IMR-90 (cell line): ENCODE measurements at regions of chr22 and their contacts with region 1.

Region 1: GRCh38 chr22:30044369-30044768 is 35.9 kb upstream of the HORMAD2 start:
- DNase-seq: peak; percentile 93
- ATAC-seq: peak; percentile 73
- H3K4me3 ChIP-seq: no peak overlapping the region
- H3K27ac ChIP-seq: no peak overlapping the region
- H3K4me1 ChIP-seq: peaks cover 4% of the 10 kb centered on the region; the same call in 1 of the 2 replicates
- H3K27me3 ChIP-seq: no peaks in the 10 kb centered on the region
- CTCF ChIP-seq: no peak
- POLR2A ChIP-seq: no peak
- RAD21 ChIP-seq: no peak; the same call in 1 of the 2 replicates

Region 2: DNA sequence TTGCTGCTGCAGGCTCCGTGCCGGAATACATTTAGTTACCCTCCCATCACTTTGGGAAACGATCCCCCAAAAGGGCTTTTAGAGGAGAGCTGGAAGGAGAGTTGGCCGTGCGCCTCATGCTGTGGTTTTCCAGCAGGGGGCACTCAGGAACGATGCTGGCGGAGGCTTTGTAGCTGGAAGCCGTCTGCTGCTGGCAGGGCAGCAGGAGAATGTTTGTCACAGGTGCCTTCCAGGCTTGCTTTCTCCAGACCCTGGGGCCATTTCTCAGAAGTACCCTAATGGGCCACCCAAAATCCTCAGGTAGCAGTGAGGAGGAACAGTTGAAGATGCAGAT is 354.5 kb before region 1 on chr22:
- CTCF ChIA-PET with region 1: no interaction called
- POLR2A ChIA-PET with region 1: no interaction called
- dilution Hi-C with region 1: loop called (anchors 25 kb)
- in situ Hi-C with region 1: no loop called
- intact Hi-C with region 1: no loop called
- DNase-seq: peak; percentile 55
- ATAC-seq: peak; percentile 82
- H3K4me3 ChIP-seq: no peak overlapping the region
- H3K27ac ChIP-seq: no peak overlapping the region
- H3K4me1 ChIP-seq: 0 out of 2 replicates have a peak, but pooled peaks cover 2% of the 10 kb centered on the region
- H3K27me3 ChIP-seq: no peaks in the 10 kb centered on the region
- CTCF ChIP-seq: peak; percentile 74
- POLR2A ChIP-seq: no peak
- RAD21 ChIP-seq: peak; percentile 78

Region 3: GRCh38 chr22:30183861-30184278 is 139.5 kb after region 1 on chr22:
- CTCF ChIA-PET with region 1: no interaction called
- POLR2A ChIA-PET with region 1: no interaction called
- dilution Hi-C with region 1: no loop called
- in situ Hi-C with region 1: no loop called
- intact Hi-C with region 1: no loop called
- DNase-seq: peak; percentile 71
- ATAC-seq: no peak
- H3K4me3 ChIP-seq: no peak overlapping the region
- H3K27ac ChIP-seq: no peak overlapping the region
- H3K4me1 ChIP-seq: peaks cover 21% of the 10 kb centered on the region
- H3K27me3 ChIP-seq: no peaks in the 10 kb centered on the region
- CTCF ChIP-seq: no peak
- POLR2A ChIP-seq: no peak
- RAD21 ChIP-seq: no peak

Region 4: DNA sequence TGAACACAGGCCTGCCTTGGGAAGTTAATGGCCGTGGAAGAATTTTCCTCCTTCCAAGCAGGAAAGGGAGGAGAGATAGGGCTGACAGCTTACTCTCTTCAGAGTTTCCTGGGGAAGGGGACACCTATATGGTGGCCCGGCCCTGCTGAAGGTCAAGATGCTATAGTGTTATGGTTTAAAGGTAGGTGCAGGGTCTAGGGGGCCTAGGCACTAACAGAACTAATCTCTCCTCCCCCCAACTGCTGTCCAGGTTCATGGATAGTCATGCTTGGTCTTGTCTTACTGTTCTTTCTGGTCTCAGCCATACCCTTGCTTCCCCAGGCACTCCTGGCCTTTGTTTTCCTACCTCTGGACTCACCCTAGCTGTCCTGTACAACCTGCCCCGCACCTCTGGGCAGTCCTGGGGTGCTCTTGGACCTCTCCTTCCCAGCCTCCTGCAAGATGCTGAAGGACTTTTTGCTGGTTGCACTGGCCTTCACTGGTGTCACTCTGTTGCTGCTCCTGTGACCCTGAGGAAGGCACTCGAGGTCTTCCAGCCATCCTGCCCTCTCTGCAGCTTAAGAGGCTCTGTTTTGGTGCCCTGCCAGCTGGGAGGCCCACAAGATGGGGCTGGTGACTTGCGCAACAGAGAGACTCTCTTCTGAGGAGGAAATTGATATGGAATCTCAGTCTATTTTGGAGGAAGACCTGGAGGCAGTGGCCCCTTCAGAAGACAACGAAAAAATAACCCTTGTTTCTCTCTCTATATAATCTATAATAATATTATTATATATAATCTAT is 409.6 kb after region 1 on chr22:
- CTCF ChIA-PET with region 1: no interaction called
- POLR2A ChIA-PET with region 1: no interaction called
- dilution Hi-C with region 1: no loop called
- in situ Hi-C with region 1: no loop called
- intact Hi-C with region 1: no loop called
- DNase-seq: no peak
- ATAC-seq: no peak
- H3K4me3 ChIP-seq: no peak overlapping the region
- H3K27ac ChIP-seq: no peak overlapping the region
- H3K4me1 ChIP-seq: no peaks in the 10 kb centered on the region
- H3K27me3 ChIP-seq: peaks cover 31% of the 10 kb centered on the region
- CTCF ChIP-seq: no peak
- POLR2A ChIP-seq: no peak
- RAD21 ChIP-seq: no peak